T-cell (primary cell): ENCODE measurements at regions of chr18 and their contacts with region 1.

Region 1: GRCh38 chr18:12883684-12884405 is at the start of gene PTPN2:
- DNase-seq: peak; percentile 79 to 97 (median 91)
- ATAC-seq: peak; percentile 86 to 92 (median 87)
- H3K4me3 ChIP-seq: peak within 1 kb of the TSS; percentile 76 to 79
- H3K4me3 Mint-ChIP-seq: peak within 1 kb of the TSS; percentile 86 to 92 (median 92)
- H3K27ac ChIP-seq: peak within 1 kb of the TSS; percentile 99
- H3K27ac Mint-ChIP-seq: peak within 1 kb of the TSS; percentile 92 to 95
- H3K4me1 ChIP-seq: peaks cover 24 to 32% of the 10 kb centered on the region in 2 experiments
- H3K4me1 Mint-ChIP-seq: peaks cover 56 to 65% (median 60%) of the 10 kb centered on the region in 3 donors
- H3K27me3 ChIP-seq: no peaks in the 10 kb centered on the region
- H3K27me3 Mint-ChIP-seq: no peaks in the 10 kb centered on the region
- total RNA-seq, gene PTPN2: 44.8 to 78.4 (median 57.2) TPM

Region 2: DNA sequence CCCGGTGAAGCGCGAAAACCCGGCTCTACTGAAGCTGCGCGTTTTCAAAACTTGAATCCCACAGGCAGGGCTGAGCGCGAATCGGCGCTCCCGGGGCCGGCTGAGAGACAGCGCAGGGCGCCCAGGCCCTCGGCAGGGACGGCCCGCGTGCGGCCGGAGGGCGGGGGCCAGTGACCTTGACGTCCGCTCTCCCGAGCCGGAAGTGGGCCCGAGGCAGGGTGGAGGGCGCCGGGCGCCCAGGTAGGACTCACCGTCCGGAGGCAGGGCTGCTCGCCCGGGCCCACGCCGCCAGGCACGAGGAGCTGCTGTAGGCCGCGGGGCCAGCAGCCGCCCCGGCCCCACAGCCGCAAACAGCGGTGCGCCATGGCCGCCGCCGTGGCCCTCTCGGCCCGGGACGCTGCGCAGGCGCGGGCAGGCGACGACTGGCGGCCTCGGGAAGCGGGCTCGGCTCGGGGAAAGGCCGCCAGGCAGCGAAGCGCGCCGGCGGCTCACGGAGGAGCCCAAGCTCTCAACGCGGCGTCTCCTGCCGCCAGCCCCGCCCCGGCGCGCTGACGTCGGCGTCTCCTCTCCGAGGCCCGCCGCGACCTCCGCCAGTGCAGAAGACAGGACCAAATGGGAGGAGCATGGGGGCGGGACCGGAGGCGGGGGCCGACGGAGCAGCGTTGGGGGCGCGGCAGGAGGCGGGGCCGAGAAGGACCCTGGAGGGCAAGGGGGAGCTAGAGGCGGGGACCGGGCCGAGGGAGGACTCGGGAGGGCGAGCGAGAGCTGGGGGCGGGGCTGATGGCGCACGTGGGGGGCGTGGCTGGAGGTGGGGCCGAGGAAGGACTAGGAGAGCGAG is 506.9 kb before region 1 on chr18 and contains the start of gene AFG3L2:
- CTCF ChIA-PET with region 1: interaction called in 1 of 2 experiments, 3 read pairs
- POLR2A ChIA-PET with region 1: interaction called, 3 to 13 read pairs
- DNase-seq: peak; percentile 98 to 100 (median 100)
- ATAC-seq: peak; percentile 87 to 93 (median 88)
- H3K4me3 ChIP-seq: peak within 1 kb of the TSS; percentile 70 to 77
- H3K4me3 Mint-ChIP-seq: peak within 1 kb of the TSS; percentile 89 to 91 (median 90)
- H3K27ac ChIP-seq: peak within 1 kb of the TSS; percentile 62
- H3K27ac Mint-ChIP-seq: peak within 1 kb of the TSS; percentile 88 to 89
- H3K4me1 ChIP-seq: peaks cover 4 to 31% of the 10 kb centered on the region in 2 experiments
- H3K4me1 Mint-ChIP-seq: peaks cover 42 to 48% (median 45%) of the 10 kb centered on the region in 3 donors
- H3K27me3 ChIP-seq: no peaks in the 10 kb centered on the region
- H3K27me3 Mint-ChIP-seq: peaks cover 0 to 2% of the 10 kb centered on the region in 2 donors
- total RNA-seq, gene AFG3L2: 30.6 to 37.4 (median 36.3) TPM

Region 3: GRCh38 chr18:12838178-12838634 is 45.6 kb before region 1 on chr18:
- CTCF ChIA-PET with region 1: interaction called in 1 of 2 experiments, 9 read pairs
- POLR2A ChIA-PET with region 1: interaction called in 1 of 2 experiments, 18 read pairs
- DNase-seq: peak in 1 of 35 experiments; percentile 20
- ATAC-seq: no peak
- H3K4me3 ChIP-seq: no peak overlapping the region
- H3K4me3 Mint-ChIP-seq: peak overlapping the region; percentile 54 to 70 (median 58)
- H3K27ac ChIP-seq: peak overlapping the region; percentile 83
- H3K27ac Mint-ChIP-seq: peak overlapping the region; percentile 90 to 95
- H3K4me1 ChIP-seq: peaks cover 24 to 29% of the 10 kb centered on the region in 2 experiments
- H3K4me1 Mint-ChIP-seq: peaks cover 53 to 57% (median 55%) of the 10 kb centered on the region in 3 donors
- H3K27me3 ChIP-seq: no peaks in the 10 kb centered on the region
- H3K27me3 Mint-ChIP-seq: no peaks in the 10 kb centered on the region

Region 4: DNA sequence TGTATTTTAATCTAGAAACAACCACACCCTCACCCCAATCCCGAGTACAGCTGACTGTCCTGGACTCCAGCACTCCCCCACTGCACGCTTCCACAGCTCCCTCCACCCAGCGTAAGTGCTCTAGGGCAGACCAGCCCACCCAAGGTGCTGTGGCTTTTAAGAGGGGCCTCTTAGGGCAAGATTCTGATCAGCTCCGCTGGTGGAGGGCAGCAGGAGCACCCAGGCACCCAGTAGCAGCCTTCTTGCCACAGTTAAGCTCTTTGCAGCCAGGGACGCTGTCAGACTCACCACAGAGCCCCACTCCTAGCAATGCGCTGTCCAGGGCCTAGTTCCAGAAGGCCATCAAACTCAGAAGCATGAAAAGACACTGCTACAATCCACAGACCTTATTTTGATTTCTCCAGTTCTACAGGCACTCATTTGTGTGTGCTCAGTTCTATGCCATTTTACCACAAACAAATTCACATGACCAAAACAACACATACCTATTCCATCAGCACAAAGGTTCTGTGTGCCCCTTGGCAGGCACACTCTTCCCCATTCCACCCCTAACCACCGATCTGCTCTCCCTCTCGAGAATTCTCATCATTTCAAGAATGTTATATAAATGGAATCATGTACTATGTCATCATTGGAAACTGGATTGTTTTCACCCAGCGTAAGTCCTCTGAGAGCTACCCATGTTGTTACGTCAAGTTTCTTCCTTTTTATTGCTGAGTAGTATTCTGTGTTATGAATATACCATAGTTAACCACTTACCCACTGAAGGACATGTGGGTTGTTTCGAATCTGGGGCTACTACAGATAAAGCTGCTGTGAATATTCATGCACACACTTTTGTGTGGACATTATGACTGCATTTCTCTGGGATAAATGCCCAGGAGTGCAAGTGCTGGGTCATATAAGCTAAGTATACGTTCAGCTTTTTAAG is 40.2 kb before region 1 on chr18:
- CTCF ChIA-PET with region 1: interaction called in 1 of 2 experiments, 9 read pairs
- POLR2A ChIA-PET with region 1: interaction called, 7 to 18 read pairs
- DNase-seq: no peak
- ATAC-seq: no peak
- H3K4me3 ChIP-seq: no peak overlapping the region
- H3K4me3 Mint-ChIP-seq: peak overlapping the region in 1 of 3 donors; percentile 18
- H3K27ac ChIP-seq: peak overlapping the region; percentile 9
- H3K27ac Mint-ChIP-seq: peak overlapping the region; percentile 53 to 62
- H3K4me1 ChIP-seq: peaks cover 19 to 29% of the 10 kb centered on the region in 2 experiments
- H3K4me1 Mint-ChIP-seq: peaks cover 76 to 87% (median 77%) of the 10 kb centered on the region in 3 donors
- H3K27me3 ChIP-seq: no peaks in the 10 kb centered on the region
- H3K27me3 Mint-ChIP-seq: no peaks in the 10 kb centered on the region

Region 5: GRCh38 chr18:12849545-12849944 is 34.3 kb before region 1 on chr18:
- CTCF ChIA-PET with region 1: interaction called in 1 of 2 experiments, 4 read pairs
- POLR2A ChIA-PET with region 1: interaction called, 7 to 11 read pairs
- DNase-seq: no peak
- ATAC-seq: no peak
- H3K4me3 ChIP-seq: no peak overlapping the region
- H3K4me3 Mint-ChIP-seq: no peak overlapping the region
- H3K27ac ChIP-seq: no peak overlapping the region
- H3K27ac Mint-ChIP-seq: no peak overlapping the region
- H3K4me1 ChIP-seq: peaks cover 0 to 6% of the 10 kb centered on the region in 2 experiments
- H3K4me1 Mint-ChIP-seq: peaks cover 40 to 72% (median 51%) of the 10 kb centered on the region in 3 donors
- H3K27me3 ChIP-seq: no peaks in the 10 kb centered on the region
- H3K27me3 Mint-ChIP-seq: no peaks in the 10 kb centered on the region

Region 6: DNA sequence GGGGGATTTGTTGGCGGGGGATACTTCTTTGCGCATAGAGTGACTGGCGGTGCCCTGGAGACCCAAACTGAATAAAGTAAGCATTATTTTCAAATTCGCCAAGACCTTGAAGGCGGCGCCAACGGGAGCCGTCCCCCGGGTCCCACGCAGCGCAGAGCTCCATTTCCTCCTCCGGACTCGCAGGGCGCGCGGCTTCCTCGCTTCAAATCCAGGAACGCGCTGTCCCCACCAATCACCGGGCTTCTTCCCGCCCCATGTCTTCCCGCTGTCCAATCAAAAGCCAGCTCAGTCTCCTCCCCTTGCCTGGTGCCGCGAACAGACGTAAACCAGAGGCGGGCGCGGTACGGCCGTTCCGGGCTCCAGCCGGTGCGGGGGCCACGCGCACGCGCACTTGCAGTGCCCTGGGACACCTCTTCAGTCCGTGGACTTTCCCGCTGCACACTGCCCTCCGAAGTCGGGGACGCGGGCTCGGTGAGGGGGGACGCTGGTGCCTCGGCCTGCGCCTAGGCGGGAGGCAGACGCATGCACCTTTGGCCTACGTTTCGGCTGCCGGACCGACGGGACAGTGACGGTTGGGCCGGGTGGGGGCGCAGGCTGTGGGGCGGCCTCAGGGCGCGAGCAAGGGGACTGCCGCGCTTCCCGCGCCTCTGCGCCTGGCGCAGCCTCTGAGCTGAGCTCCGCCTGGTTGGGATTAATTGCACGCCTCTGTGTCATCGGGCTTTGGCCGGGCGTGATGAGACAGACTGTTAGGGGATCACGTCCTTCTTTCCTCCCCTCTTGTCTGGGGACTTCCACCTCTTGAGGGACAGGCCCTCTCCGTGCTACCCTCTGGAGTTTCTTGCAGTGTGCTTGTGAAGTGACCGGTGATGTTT is 107.4 kb after region 1 on chr18 and contains the start of gene CEP192:
- CTCF ChIA-PET with region 1: interaction called in 1 of 2 experiments, 10 read pairs
- POLR2A ChIA-PET with region 1: interaction called, 6 to 16 read pairs
- DNase-seq: peak; percentile 93 to 99 (median 97)
- ATAC-seq: peak; percentile 94 to 99 (median 96)
- H3K4me3 ChIP-seq: peak within 1 kb of the TSS; percentile 62 to 99
- H3K4me3 Mint-ChIP-seq: peak within 1 kb of the TSS; percentile 93 to 100 (median 94)
- H3K27ac ChIP-seq: peak within 1 kb of the TSS; percentile 55
- H3K27ac Mint-ChIP-seq: peak within 1 kb of the TSS; percentile 92 to 93
- H3K4me1 ChIP-seq: peaks cover 14 to 24% of the 10 kb centered on the region in 2 experiments
- H3K4me1 Mint-ChIP-seq: peaks cover 14 to 19% (median 16%) of the 10 kb centered on the region in 3 donors
- H3K27me3 ChIP-seq: no peaks in the 10 kb centered on the region
- H3K27me3 Mint-ChIP-seq: no peaks in the 10 kb centered on the region
- total RNA-seq, gene CEP192: 28.9 to 37.2 (median 32.9) TPM

Region 7: DNA sequence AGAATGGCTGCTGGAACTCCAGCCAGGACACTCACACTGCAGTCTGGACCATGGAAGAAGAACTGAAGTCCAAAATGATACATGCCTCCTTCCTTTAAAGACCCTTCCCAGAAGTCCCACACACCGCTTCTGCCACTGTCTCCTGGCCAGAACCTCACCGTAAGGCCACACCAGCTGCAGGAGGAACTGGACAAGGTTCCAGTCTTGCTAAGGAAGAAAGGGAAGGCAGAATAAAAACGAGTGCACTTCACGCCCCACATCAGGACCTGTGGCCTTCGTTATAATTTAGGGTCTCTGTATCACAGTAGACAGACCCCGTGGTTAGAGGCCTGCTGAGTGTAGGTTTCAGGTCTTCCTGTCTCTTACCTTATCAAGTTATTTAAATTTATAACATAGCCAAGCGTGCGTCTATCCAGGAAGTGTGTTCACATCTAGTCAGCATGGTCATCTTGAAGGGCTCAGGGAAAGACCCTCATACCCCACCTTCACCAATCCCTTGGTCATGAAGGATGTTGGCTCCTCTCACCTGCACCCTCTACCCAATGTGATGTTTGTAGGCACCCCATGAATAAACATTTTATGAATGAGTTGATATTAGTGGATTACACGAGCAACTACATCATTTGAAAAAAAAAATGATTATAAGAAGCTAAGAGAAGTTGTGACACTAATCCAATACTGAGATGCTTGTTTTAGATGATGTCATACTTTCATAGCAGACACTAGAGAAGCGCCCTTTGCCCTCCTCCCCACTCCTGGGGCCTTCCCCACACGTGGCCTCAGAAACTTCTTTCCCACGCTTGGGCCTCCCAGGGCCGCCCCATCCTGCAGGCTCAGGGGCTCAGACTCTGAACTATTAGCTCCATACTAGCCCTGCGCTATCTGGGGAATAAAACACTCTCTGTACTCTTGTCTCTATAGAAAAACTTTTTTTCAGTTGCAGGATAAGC is 684.9 kb after region 1 on chr18:
- CTCF ChIA-PET with region 1: no interaction called
- POLR2A ChIA-PET with region 1: interaction called in 1 of 2 experiments, 10 read pairs
- DNase-seq: peak in 1 of 35 experiments; percentile 28
- ATAC-seq: peak in 1 of 4 experiments; percentile 33
- H3K4me3 ChIP-seq: no peak overlapping the region
- H3K4me3 Mint-ChIP-seq: no peak overlapping the region
- H3K27ac ChIP-seq: no peak overlapping the region
- H3K27ac Mint-ChIP-seq: peak overlapping the region in 1 of 2 donors; percentile 72
- H3K4me1 ChIP-seq: peaks cover 13 to 32% of the 10 kb centered on the region in 2 experiments
- H3K4me1 Mint-ChIP-seq: peaks cover 27 to 52% (median 47%) of the 10 kb centered on the region in 3 donors
- H3K27me3 ChIP-seq: no peaks in the 10 kb centered on the region
- H3K27me3 Mint-ChIP-seq: no peaks in the 10 kb centered on the region